AG04450 (cell line): ENCODE measurements at regions of chr1 and their contacts with region 1.

Region 1: GRCh38 chr1:217907504-217907903 is 276.4 kb downstream of the SPATA17 start:
- DNase-seq: no peak
- H3K4me3 ChIP-seq: no peak overlapping the region
- H3K27ac ChIP-seq: no peak overlapping the region
- H3K27me3 ChIP-seq: no peaks in the 10 kb centered on the region
- CTCF ChIP-seq: no peak

Region 2: GRCh38 chr1:216045400-216045799 is 1862.1 kb before region 1 on chr1:
- CTCF ChIA-PET with region 1: interaction called, 11 read pairs
- POLR2A ChIA-PET with region 1: no interaction called
- DNase-seq: peak; percentile 83
- H3K4me3 ChIP-seq: no peak overlapping the region
- H3K27ac ChIP-seq: peak overlapping the region; percentile 92
- H3K27me3 ChIP-seq: no peaks in the 10 kb centered on the region
- CTCF ChIP-seq: no peak

Region 3: GRCh38 chr1:217876896-217877295 is 30.6 kb before region 1 on chr1:
- CTCF ChIA-PET with region 1: no interaction called
- POLR2A ChIA-PET with region 1: no interaction called
- DNase-seq: no peak
- H3K4me3 ChIP-seq: no peak overlapping the region
- H3K27ac ChIP-seq: no peak overlapping the region
- H3K27me3 ChIP-seq: no peaks in the 10 kb centered on the region
- CTCF ChIP-seq: no peak